MCF 10A (cell line): ENCODE measurements at regions of chr3 and their contacts with region 1.

Region 1: DNA sequence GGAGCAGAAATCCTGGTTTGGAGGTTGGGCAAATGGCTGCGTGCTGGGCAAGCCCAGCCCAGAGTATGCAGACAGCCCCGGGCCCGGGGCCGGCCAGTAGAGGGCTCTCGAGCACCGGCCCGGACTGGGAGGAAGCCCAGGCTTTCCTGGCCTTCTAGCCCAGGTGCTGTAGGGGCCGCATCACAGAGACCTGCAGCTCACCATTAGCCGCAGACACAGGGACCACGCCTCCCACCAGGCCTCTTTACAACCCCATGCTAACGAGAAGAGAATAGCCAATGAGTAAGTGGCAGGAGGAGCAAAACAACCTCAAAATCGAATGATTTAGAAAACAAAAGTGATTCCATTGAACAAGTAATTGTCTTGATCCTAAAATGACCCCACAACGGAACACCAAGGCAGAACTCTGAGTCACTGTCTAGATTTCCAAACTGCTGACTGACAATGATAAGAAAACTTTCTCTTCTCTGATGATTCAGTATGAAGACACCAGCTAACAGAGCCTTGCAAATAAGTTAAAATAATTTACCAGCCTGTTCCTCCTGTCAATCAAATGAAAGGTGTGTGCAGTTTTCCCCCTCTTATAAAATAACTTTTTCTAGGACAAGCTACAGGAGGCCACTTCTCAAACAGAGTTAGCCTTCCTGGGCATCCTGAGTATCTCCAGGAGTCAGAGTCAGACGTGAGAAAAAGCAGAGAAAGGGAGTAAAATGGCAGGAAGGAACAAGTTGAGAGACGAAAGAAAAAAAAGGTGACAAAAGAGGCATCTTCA is 102.2 kb downstream of the DGKG start:
- DNase-seq: peak; percentile 75
- H3K4me3 Mint-ChIP-seq: no peak overlapping the region
- H3K27ac Mint-ChIP-seq: no peak overlapping the region
- H3K4me1 Mint-ChIP-seq: peaks cover 14% of the 10 kb centered on the region
- H3K27me3 Mint-ChIP-seq: peaks cover 11% of the 10 kb centered on the region
- CTCF ChIP-seq: peak; percentile 78

Region 2: GRCh38 chr3:185572183-185572582 is 687.6 kb before region 1 on chr3:
- CTCF ChIA-PET with region 1: no interaction called
- POLR2A ChIA-PET with region 1: no interaction called
- intact Hi-C with region 1: no loop called
- DNase-seq: no peak
- H3K4me3 Mint-ChIP-seq: no peak overlapping the region
- H3K27ac Mint-ChIP-seq: no peak overlapping the region
- H3K4me1 Mint-ChIP-seq: peaks cover 7% of the 10 kb centered on the region
- H3K27me3 Mint-ChIP-seq: no peaks in the 10 kb centered on the region
- CTCF ChIP-seq: no peak

Region 3: DNA sequence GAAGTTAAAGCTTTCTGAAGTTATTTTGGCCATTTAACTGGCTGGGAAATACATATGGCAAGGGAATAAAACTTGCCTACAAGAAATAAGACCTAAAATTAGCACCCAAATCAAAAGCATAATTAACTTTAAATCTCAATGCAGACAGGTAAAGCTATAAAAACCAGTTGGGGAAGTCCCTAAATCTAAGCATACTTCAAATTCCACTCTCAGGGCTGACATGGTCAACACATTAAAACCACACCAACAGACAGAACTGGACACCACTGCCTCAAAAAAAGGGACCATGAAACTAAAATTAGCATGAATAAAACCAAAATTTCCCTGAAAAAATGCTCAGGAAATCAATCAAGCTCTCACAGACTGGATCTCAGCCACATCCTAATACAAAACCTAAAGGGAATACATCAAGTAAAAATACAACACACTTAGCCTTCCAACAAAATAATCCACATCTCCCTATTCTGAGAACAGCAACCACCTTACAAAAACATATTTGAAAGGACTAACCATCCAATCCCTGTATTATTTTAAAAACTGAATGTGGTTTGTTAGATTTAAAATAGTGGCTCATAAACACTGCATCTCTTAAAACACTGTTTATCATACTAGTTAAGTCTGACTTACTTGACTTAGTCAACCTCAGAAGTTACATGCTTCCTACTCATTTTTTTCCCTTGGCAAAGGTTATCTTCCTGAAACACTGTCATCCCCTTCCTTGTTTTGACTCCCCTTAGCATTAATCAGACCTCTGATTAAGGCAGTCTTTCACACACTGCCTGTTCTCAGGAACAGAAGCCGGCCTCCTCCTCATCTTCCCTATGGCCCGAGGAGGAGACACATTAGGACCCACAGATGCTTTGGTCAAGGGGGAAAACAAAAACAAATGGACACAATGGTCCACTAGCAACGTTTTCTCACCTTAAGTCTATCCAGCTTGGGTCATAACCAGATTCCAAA is 330.3 kb before region 1 on chr3:
- CTCF ChIA-PET with region 1: no interaction called
- POLR2A ChIA-PET with region 1: no interaction called
- intact Hi-C with region 1: no loop called
- DNase-seq: no peak
- H3K4me3 Mint-ChIP-seq: peak overlapping the region; percentile 98
- H3K27ac Mint-ChIP-seq: peak overlapping the region; percentile 21
- H3K4me1 Mint-ChIP-seq: peaks cover 93% of the 10 kb centered on the region
- H3K27me3 Mint-ChIP-seq: no peaks in the 10 kb centered on the region
- CTCF ChIP-seq: no peak

Region 4: DNA sequence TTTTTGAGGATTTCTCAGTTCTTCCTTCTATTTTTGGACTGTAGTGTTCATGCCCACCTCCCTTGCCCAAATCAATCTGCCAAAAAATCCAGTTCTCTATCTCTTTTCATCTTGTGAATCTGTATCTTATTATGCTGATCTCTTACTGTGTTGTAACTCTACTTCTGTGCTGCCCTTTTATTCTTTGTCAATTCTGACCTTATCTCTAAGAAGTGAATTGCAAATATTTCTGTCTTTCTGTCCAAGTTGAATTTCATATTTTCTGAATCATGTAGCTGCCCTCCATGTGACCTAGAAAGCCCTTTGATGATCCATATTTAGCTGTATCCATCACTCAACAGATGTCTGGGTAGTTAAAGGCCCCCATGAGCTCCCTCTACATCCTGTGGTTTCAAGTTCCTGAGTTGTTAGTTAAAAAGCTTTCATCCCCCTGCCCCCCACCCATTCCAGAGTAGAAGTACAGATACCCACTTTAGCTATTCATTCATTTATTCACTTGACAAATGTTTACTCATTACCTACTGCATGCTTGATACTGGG is 117.3 kb before region 1 on chr3:
- CTCF ChIA-PET with region 1: no interaction called
- POLR2A ChIA-PET with region 1: no interaction called
- intact Hi-C with region 1: no loop called
- DNase-seq: no peak
- H3K4me3 Mint-ChIP-seq: no peak overlapping the region
- H3K27ac Mint-ChIP-seq: no peak overlapping the region
- H3K4me1 Mint-ChIP-seq: no peaks in the 10 kb centered on the region
- H3K27me3 Mint-ChIP-seq: peaks cover 21% of the 10 kb centered on the region
- CTCF ChIP-seq: no peak

Region 5: DNA sequence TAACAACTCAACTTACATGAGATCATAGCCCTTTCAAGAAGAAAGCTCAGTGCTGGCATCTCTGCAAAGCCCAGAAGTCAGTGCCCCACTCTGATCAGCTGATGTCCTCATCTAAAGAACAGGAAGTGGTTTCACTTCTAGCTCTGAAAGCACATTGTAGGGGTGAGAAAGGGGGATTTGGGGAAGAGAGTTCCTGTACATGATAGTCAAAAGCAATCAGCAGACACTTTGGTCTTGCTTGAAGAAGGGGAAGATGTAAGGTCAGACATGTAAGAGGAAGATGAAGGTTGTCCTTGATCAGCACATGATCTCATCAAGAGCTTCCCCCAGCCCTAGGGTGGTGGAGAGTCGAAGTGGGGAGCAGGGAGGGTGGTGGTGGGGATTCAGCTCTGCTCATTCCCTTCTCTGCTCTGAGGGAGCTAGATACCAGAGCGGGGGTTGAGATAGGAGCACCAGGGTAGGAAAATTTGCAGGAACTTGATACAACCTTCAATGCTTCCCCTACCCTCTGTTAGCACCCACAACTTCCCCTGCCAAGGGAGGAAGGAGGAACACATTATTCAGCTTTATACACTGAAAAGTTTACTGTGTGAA is 74.5 kb before region 1 on chr3:
- CTCF ChIA-PET with region 1: no interaction called
- POLR2A ChIA-PET with region 1: no interaction called
- intact Hi-C with region 1: no loop called
- DNase-seq: no peak
- H3K4me3 Mint-ChIP-seq: no peak overlapping the region
- H3K27ac Mint-ChIP-seq: no peak overlapping the region
- H3K4me1 Mint-ChIP-seq: no peaks in the 10 kb centered on the region
- H3K27me3 Mint-ChIP-seq: peaks cover 48% of the 10 kb centered on the region
- CTCF ChIP-seq: no peak

Region 6: DNA sequence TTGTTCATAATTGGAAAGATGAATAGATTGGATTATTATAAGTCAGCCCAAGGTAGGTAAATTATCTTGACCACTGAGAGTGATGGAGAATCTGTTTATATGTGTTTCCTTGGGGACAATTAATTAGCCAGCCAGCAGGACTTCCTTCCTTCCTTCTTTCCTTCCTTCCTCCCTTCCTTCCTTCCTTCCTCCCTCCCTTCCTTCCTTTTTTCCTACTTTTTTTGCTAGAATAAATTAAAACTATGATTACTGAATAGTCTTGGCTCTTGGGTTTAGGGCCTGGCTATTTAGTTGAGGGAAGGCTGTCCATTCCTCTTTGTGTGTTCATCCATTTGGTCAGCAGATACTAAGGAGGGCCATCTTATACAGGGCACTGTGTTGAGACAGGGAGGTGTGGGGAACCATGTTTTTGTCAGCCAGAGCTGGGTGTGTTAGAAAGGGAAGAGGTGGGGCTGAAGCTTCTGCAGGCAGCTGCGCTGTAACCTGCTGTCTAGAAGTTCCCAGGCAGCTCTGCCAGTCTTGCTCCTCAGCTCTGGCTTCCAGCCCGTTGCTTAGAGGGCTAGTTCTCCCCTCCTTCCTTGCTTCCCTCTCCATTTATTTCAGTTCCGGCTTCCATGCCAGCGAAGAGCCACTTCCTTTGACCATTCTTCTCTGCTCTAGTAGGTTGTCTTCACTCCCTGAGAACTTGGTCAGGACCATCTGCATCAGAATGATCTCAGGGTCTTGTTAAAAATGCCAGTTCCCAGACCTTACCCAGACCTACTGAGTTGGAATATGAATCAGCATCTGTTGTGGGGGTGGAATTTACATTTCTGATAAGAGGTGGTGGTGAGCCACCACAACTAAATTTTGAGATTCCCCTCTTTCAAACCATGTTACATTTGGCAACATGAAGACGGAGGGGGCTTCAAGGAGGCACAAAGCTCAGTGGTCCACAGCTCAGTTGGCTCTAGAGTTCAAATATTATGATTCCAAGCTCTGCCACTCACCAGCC is 11.7 kb before region 1 on chr3:
- CTCF ChIA-PET with region 1: interaction called, 11 read pairs
- POLR2A ChIA-PET with region 1: no interaction called
- intact Hi-C with region 1: no loop called
- DNase-seq: no peak
- H3K4me3 Mint-ChIP-seq: no peak overlapping the region
- H3K27ac Mint-ChIP-seq: no peak overlapping the region
- H3K4me1 Mint-ChIP-seq: no peaks in the 10 kb centered on the region
- H3K27me3 Mint-ChIP-seq: peaks cover 17% of the 10 kb centered on the region
- CTCF ChIP-seq: no peak

Region 7: GRCh38 chr3:186277268-186277909 is 17.6 kb after region 1 on chr3:
- CTCF ChIA-PET with region 1: interaction called, 20 read pairs
- POLR2A ChIA-PET with region 1: interaction called, 3 read pairs
- intact Hi-C with region 1: no loop called
- DNase-seq: peak; percentile 54
- H3K4me3 Mint-ChIP-seq: no peak overlapping the region
- H3K27ac Mint-ChIP-seq: no peak overlapping the region
- H3K4me1 Mint-ChIP-seq: no peaks in the 10 kb centered on the region
- H3K27me3 Mint-ChIP-seq: peaks cover 16% of the 10 kb centered on the region
- CTCF ChIP-seq: peak; percentile 26

Region 8: GRCh38 chr3:186487819-186488218 is 228.0 kb after region 1 on chr3:
- CTCF ChIA-PET with region 1: interaction called, 3 read pairs
- POLR2A ChIA-PET with region 1: no interaction called
- intact Hi-C with region 1: loop called (anchors 1 kb)
- DNase-seq: peak; percentile 16
- H3K4me3 Mint-ChIP-seq: no peak overlapping the region
- H3K27ac Mint-ChIP-seq: no peak overlapping the region
- H3K4me1 Mint-ChIP-seq: no peaks in the 10 kb centered on the region
- H3K27me3 Mint-ChIP-seq: peaks cover 31% of the 10 kb centered on the region
- CTCF ChIP-seq: no peak

Region 9: GRCh38 chr3:186534113-186534669 is 274.4 kb after region 1 on chr3:
- CTCF ChIA-PET with region 1: interaction called, 107 read pairs
- POLR2A ChIA-PET with region 1: interaction called, 7 read pairs
- intact Hi-C with region 1: no loop called
- DNase-seq: no peak
- H3K4me3 Mint-ChIP-seq: no peak overlapping the region
- H3K27ac Mint-ChIP-seq: no peak overlapping the region
- H3K4me1 Mint-ChIP-seq: no peaks in the 10 kb centered on the region
- H3K27me3 Mint-ChIP-seq: no peaks in the 10 kb centered on the region
- CTCF ChIP-seq: no peak

Region 10: GRCh38 chr3:187714404-187714979 is 1454.7 kb after region 1 on chr3:
- CTCF ChIA-PET with region 1: no interaction called
- POLR2A ChIA-PET with region 1: no interaction called
- intact Hi-C with region 1: loop called (anchors 5 kb)
- DNase-seq: peak; percentile 84
- H3K4me3 Mint-ChIP-seq: no peak overlapping the region
- H3K27ac Mint-ChIP-seq: no peak overlapping the region
- H3K4me1 Mint-ChIP-seq: peaks cover 6% of the 10 kb centered on the region
- H3K27me3 Mint-ChIP-seq: no peaks in the 10 kb centered on the region
- CTCF ChIP-seq: peak; percentile 89